K562 (cell line): ENCODE measurements at regions of chr10 and their contacts with region 1.

Region 1: GRCh38 chr10:101214446-101215396 is 14.5 kb downstream of the LBX1 start:
- DNase-seq: peak; percentile 66 to 76 (median 74)
- ATAC-seq: peak; percentile 92
- H3K4me3 ChIP-seq: no peak overlapping the region
- H3K27ac ChIP-seq: no peak overlapping the region
- H3K4me1 ChIP-seq: peaks cover 0 to 41% of the 10 kb centered on the region in 2 experiments; a peak in 3 of 5 replicates
- H3K27me3 ChIP-seq: peaks cover 12 to 60% of the 10 kb centered on the region in 2 experiments; a peak in 4 of 5 replicates
- CTCF ChIP-seq: peak; percentile 70 to 86 (median 77)
- EP300 ChIP-seq: no peak
- POLR2A ChIP-seq: no peak
- RAD21 ChIP-seq: peak; percentile 50 to 68

Region 2: DNA sequence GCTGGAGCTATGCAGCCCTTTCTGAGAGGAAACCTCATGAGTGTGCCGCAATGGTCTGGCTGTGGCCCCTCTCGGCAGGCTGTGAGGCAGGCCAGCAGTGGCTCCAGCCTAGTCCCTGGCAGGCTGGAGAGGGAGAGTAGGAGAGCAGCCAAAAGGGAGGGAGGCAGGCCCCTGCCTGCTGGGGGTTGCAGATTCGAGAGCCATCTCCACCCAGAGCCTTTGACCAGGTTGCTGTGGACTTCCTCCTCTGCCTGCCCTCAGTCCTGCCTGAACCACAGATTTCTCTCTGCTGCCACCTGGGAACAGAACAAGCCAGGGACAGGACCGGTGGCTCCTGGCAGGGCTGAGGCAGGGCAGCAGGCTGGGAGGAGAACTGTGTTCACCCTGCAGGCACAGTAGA is 455.4 kb before region 1 on chr10:
- CTCF ChIA-PET with region 1: no interaction called
- POLR2A ChIA-PET with region 1: no interaction called
- in situ Hi-C with region 1: no loop called
- intact Hi-C with region 1: no loop called
- DNase-seq: no peak
- ATAC-seq: no peak
- H3K4me3 ChIP-seq: no peak overlapping the region
- H3K27ac ChIP-seq: no peak overlapping the region
- H3K4me1 ChIP-seq: no peaks in the 10 kb centered on the region
- H3K27me3 ChIP-seq: peaks cover 8 to 36% of the 10 kb centered on the region in 2 experiments; a peak in 3 of 5 replicates
- CTCF ChIP-seq: no peak
- EP300 ChIP-seq: no peak
- POLR2A ChIP-seq: no peak
- RAD21 ChIP-seq: no peak

Region 3: DNA sequence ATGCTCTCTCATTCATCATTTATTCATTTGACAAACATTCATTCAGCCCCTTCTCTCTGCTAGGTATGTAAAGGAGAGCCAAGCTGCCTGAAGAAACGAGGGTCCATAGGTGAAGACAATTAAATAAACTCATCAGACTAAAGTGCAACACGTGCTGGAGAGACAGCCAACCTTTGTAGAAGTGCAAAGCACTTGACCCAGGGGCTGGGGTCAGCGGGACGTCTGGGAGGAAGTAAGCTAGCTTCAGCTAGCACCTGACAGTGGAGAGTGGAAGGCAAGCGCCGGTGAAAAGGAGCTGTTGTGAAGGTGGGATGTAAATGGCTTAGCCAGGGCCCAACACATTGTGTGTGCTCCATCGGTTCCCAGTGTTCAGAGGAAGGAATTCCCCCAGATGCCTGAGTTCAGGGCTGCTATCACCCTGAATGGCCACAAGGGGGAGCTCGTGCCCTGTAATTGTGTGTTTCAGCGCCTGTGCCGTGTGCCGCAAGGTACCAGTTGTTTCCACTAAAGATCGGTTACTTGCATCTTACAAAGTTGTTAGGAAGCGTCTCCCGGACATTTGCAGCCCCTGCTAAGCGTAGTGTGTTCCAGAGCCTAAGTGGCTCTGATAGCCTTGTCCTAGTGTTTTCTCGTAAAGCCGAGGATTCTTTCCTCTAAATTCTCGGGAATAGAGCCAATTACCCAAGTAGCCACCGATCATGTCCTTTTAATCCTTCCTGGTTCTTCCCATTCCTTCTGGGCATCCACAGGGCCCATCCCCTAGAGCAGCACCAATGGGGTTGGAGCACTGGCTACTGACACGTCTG is 53.0 kb before region 1 on chr10:
- CTCF ChIA-PET with region 1: interaction called, 6 read pairs
- POLR2A ChIA-PET with region 1: no interaction called
- in situ Hi-C with region 1: loop called (anchors 5 kb)
- intact Hi-C with region 1: loop called (anchors 5 kb)
- DNase-seq: peak; percentile 67 to 74 (median 70)
- ATAC-seq: peak; percentile 90
- H3K4me3 ChIP-seq: no peak overlapping the region
- H3K27ac ChIP-seq: no peak overlapping the region
- H3K4me1 ChIP-seq: no peaks in the 10 kb centered on the region
- H3K27me3 ChIP-seq: no peaks in the 10 kb centered on the region; a peak in 1 of 5 replicates
- CTCF ChIP-seq: peak; percentile 80 to 90 (median 86)
- EP300 ChIP-seq: no peak
- POLR2A ChIP-seq: no peak
- RAD21 ChIP-seq: peak; percentile 69 to 81

Region 4: GRCh38 chr10:101441541-101442455 is 227.1 kb after region 1 on chr10:
- CTCF ChIA-PET with region 1: no interaction called
- POLR2A ChIA-PET with region 1: no interaction called
- in situ Hi-C with region 1: loop called (anchors 10 kb)
- intact Hi-C with region 1: loop called (anchors 1 kb)
- DNase-seq: peak; percentile 38 to 78 (median 56)
- ATAC-seq: peak; percentile 98
- H3K4me3 ChIP-seq: no peak overlapping the region
- H3K27ac ChIP-seq: no peak overlapping the region
- H3K4me1 ChIP-seq: peaks cover 0 to under 1% of the 10 kb centered on the region in 2 experiments; a peak in 3 of 5 replicates
- H3K27me3 ChIP-seq: no peaks in the 10 kb centered on the region
- CTCF ChIP-seq: peak; percentile 70 to 82 (median 72)
- EP300 ChIP-seq: peak; percentile 40
- POLR2A ChIP-seq: no peak
- RAD21 ChIP-seq: peak; percentile 80 to 88

Region 5: DNA sequence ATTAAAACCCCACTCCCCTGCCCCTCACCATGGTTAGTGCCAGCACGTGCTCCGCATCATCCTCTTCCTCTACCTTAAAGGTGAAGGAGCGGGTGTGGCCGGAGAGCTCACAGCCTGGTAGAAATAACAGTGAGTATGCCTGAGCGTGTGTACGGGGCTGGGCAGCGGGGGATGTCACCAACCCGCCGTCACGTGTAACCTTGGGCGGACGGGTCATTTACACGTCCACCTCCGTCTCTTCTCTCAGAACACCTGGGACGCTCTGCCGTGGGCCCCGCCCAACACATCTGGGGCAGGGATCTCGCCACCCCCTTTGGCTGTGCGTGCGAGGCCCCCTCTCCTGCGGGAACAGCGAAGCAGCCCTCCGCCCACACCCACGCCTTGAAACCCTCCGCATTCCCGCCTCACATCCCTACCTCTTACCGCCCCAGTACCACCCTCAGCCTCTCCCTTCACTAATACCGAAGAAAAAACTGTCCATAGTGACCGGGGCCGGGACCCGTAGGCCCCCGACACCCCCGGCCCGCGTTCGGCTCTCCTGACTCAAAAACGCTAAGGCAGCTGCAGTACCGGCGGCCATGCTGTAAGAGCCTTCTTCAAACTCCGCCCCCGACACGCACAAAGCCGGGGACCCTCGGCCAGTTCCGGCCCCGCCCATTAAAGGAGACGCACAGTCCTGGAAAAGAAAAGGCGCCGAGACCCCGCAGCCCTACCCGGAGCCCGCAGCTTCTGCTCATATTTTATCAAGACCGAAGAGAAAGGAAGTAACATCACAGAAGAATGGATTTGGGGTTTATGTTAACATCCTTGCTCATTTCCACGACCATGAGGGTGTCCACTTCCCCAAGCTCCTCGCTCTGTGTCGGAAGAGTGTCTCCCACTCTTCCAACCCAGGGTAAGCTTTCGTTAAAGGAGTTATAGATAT is 568.4 kb after region 1 on chr10 and contains the start of gene NPM3:
- CTCF ChIA-PET with region 1: interaction called, 5 read pairs
- POLR2A ChIA-PET with region 1: no interaction called
- in situ Hi-C with region 1: no loop called
- intact Hi-C with region 1: loop called (anchors 5 kb)
- DNase-seq: peak; percentile 82 to 89 (median 85)
- ATAC-seq: peak; percentile 93
- H3K4me3 ChIP-seq: peak within 1 kb of the TSS; percentile 73
- H3K27ac ChIP-seq: peak within 1 kb of the TSS; percentile 65
- H3K4me1 ChIP-seq: peaks cover 17 to 46% of the 10 kb centered on the region in 2 experiments
- H3K27me3 ChIP-seq: no peaks in the 10 kb centered on the region
- CTCF ChIP-seq: no peak
- EP300 ChIP-seq: no peak
- POLR2A ChIP-seq: peak; percentile 79
- RAD21 ChIP-seq: no peak
- polyA plus RNA-seq, gene NPM3: 15.2 to 54.4 TPM

Region 6: GRCh38 chr10:102090772-102091171 is 876.1 kb after region 1 on chr10:
- CTCF ChIA-PET with region 1: no interaction called
- POLR2A ChIA-PET with region 1: no interaction called
- in situ Hi-C with region 1: loop called (anchors 25 kb)
- intact Hi-C with region 1: no loop called
- DNase-seq: no peak
- ATAC-seq: no peak
- H3K4me3 ChIP-seq: no peak overlapping the region
- H3K27ac ChIP-seq: no peak overlapping the region
- H3K4me1 ChIP-seq: no peaks in the 10 kb centered on the region; a peak in 1 of 5 replicates
- H3K27me3 ChIP-seq: no peaks in the 10 kb centered on the region
- CTCF ChIP-seq: no peak
- EP300 ChIP-seq: no peak
- POLR2A ChIP-seq: no peak
- RAD21 ChIP-seq: no peak